ENCODE measurements at regions of chr2 and their contacts with region 1.

Region 1: GRCh38 chr2:99066075-99066958 is 75.2 kb upstream of the C2orf15 start:
- DNase-seq: peak in 7 of 9 donors; percentile 22 to 54 (median 40)
- ATAC-seq: peak; percentile 93
- H3K4me3 ChIP-seq: no peak overlapping the region
- H3K4me3 Mint-ChIP-seq: no peak overlapping the region
- H3K27ac ChIP-seq: peak overlapping the region; percentile 52
- H3K27ac Mint-ChIP-seq: no peak overlapping the region
- H3K4me1 ChIP-seq: peaks cover 8 to 23% of the 10 kb centered on the region in 2 donors
- H3K4me1 Mint-ChIP-seq: peaks cover 0 to 6% (median 0%) of the 10 kb centered on the region in 7 donors
- H3K27me3 ChIP-seq: no peaks in the 10 kb centered on the region
- H3K27me3 Mint-ChIP-seq: peaks cover 0 to 3% (median 0%) of the 10 kb centered on the region in 5 donors

Region 2: GRCh38 chr2:97995734-97996624 is 1070.3 kb before region 1 on chr2 and contains the start of gene TMEM131:
- CTCF ChIA-PET with region 1: no interaction called
- POLR2A ChIA-PET with region 1: no interaction called
- intact Hi-C with region 1: loop called in 1 of 2 experiments (anchors 5 kb)
- DNase-seq: peak; percentile 89 to 98 (median 95)
- ATAC-seq: peak; percentile 93
- H3K4me3 ChIP-seq: peak within 1 kb of the TSS; percentile 90
- H3K4me3 Mint-ChIP-seq: peak within 1 kb of the TSS; percentile 85 to 98 (median 96)
- H3K27ac ChIP-seq: peak within 1 kb of the TSS; percentile 96
- H3K27ac Mint-ChIP-seq: peak within 1 kb of the TSS; percentile 86 to 95 (median 93)
- H3K4me1 ChIP-seq: peaks cover 14 to 17% of the 10 kb centered on the region in 2 donors
- H3K4me1 Mint-ChIP-seq: peaks cover 20 to 40% (median 38%) of the 10 kb centered on the region in 7 donors
- H3K27me3 ChIP-seq: no peaks in the 10 kb centered on the region
- H3K27me3 Mint-ChIP-seq: peaks cover 0 to 4% (median 0%) of the 10 kb centered on the region in 5 donors
- total RNA-seq, gene TMEM131: 39.7 to 46.4 (median 43.6) TPM

Region 3: DNA sequence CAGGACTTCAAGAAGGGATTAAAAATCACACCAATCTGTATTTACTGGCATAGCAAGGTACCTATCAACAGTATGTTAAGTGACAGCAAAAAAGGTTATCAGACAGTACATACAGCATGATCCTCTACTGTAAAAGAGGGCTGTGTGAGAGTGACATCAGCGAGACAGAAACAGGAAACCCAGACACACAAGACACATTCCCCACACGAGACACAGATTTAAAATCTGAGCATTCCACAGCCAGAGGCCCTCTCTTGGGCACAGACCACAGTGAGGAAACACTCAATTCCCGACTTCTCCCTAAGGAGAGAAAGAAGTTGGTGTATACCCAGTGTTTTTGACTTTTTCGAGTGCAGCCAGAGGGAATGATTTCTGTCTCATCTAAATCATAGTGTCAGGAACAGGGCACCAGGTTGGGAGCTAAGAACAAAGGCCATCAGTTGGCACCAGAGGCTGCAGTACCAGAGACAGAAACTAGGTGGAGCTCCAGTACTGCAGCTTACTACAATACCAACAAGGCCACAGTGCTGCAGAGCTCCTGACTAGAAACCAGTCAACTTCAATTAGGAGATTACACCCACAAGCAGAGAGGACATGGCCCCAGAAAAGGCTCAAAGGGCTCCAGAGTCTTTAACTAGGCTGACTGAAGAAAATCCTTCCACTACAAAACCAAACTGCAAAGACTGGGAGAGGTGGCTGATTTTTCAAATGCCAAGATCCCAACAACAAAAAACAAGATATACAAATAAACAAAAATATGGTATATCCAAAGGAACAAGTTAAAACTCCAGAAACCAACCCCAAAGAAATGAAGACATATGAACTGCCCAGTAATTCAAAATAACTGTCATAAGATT is 417.0 kb before region 1 on chr2:
- CTCF ChIA-PET with region 1: interaction called, 4 read pairs
- POLR2A ChIA-PET with region 1: no interaction called
- intact Hi-C with region 1: loop called (anchors 1 kb)
- DNase-seq: peak; percentile 53 to 87 (median 80)
- ATAC-seq: peak; percentile 99
- H3K4me3 ChIP-seq: no peak overlapping the region
- H3K4me3 Mint-ChIP-seq: peak overlapping the region in 8 of 10 donors; percentile 5 to 66 (median 50)
- H3K27ac ChIP-seq: peak overlapping the region; percentile 39
- H3K27ac Mint-ChIP-seq: peak overlapping the region; percentile 73 to 96 (median 92)
- H3K4me1 ChIP-seq: peaks cover 29 to 44% of the 10 kb centered on the region in 2 donors
- H3K4me1 Mint-ChIP-seq: peaks cover 40 to 66% (median 57%) of the 10 kb centered on the region in 7 donors
- H3K27me3 ChIP-seq: no peaks in the 10 kb centered on the region
- H3K27me3 Mint-ChIP-seq: no peaks in the 10 kb centered on the region

Region 4: GRCh38 chr2:99141110-99142108 is 75.1 kb after region 1 on chr2 and contains the start of gene C2orf15:
- CTCF ChIA-PET with region 1: no interaction called
- POLR2A ChIA-PET with region 1: interaction called, 9 read pairs
- intact Hi-C with region 1: loop called in 1 of 2 experiments (anchors 2 kb)
- DNase-seq: peak; percentile 89 to 98 (median 96)
- ATAC-seq: peak; percentile 95
- H3K4me3 ChIP-seq: peak within 1 kb of the TSS; percentile 97
- H3K4me3 Mint-ChIP-seq: peak within 1 kb of the TSS; percentile 90 to 99 (median 97)
- H3K27ac ChIP-seq: peak within 1 kb of the TSS; percentile 82
- H3K27ac Mint-ChIP-seq: peak within 1 kb of the TSS; percentile 92 to 99 (median 98)
- H3K4me1 ChIP-seq: peaks cover 13% of the 10 kb centered on the region in 2 donors
- H3K4me1 Mint-ChIP-seq: peaks cover 0 to 31% (median 25%) of the 10 kb centered on the region in 7 donors
- H3K27me3 ChIP-seq: no peaks in the 10 kb centered on the region
- H3K27me3 Mint-ChIP-seq: peaks cover 0 to 41% (median 0%) of the 10 kb centered on the region in 5 donors
- total RNA-seq, gene C2orf15: 0.48 to 3.8 (median 3.1) TPM

Region 5: DNA sequence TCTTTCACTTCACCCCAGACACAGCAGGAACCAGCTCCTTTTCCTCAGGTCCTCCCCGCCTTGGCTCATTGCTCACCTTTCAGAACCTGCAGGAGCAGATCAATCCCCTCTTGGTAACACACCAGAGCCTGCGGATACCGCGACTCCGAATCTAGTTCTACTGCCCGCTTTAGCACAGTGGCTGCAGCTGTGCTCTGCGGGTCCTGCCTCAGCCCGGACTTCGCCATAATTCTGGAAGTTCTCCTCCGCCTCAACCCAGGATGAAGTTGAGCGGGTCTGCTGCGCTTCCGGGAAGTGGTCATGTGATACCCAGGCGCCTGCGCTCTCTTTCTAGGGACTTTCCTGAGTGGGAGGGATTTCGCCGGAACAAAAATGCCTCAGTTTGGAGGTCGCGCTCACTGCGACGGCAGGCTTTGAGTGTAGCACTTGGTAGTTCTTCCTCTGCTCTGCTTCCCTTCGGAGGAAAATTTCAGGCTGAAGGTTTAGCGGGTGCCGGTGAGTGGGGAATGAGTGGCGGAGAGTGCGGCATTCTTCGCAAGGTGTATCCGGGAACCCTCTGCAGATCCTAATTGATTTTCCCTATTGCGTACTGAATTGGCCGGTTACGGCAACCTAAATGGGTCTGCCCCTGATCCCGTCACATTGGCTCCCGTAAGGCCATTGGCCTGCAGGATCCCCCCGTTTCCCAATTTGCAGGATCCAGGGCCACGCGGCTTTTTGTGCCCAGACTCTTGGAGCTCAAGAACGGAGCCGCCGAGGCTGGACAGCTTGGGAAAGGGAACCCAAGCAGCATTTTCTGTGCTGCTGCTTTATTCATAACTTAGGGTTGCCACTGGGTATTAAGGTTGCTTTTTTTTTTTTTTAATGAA is 114.7 kb after region 1 on chr2 and contains the starts of genes MITD1 and MRPL30:
- CTCF ChIA-PET with region 1: no interaction called
- POLR2A ChIA-PET with region 1: interaction called, 11 read pairs
- intact Hi-C with region 1: loop called in 1 of 2 experiments (anchors 5 kb)
- DNase-seq: peak; percentile 72 to 94 (median 90)
- ATAC-seq: peak; percentile 97
- H3K4me3 ChIP-seq: peak within 1 kb of the TSS; percentile 97
- H3K4me3 Mint-ChIP-seq: peak within 1 kb of the TSS; percentile 94 to 100 (median 99)
- H3K27ac ChIP-seq: peak within 1 kb of the TSS; percentile 89
- H3K27ac Mint-ChIP-seq: peak within 1 kb of the TSS; percentile 93 to 99 (median 99)
- H3K4me1 ChIP-seq: peaks cover 30 to 32% of the 10 kb centered on the region in 2 donors
- H3K4me1 Mint-ChIP-seq: peaks cover 41 to 85% (median 74%) of the 10 kb centered on the region in 7 donors
- H3K27me3 ChIP-seq: no peaks in the 10 kb centered on the region
- H3K27me3 Mint-ChIP-seq: no peaks in the 10 kb centered on the region
- total RNA-seq, gene MITD1: 26.8 to 80.5 (median 73.8) TPM
- total RNA-seq, gene MRPL30: 16.1 to 26.0 (median 21.9) TPM

Measured in naive thymus-derived CD4-positive, alpha-beta T cell (primary cell).